ENCODE measurements at regions of chr6 and their contacts with region 1.

Region 1: GRCh38 chr6:109009236-109009961 is 85.2 kb downstream of the SESN1 start:
- DNase-seq: peak; percentile 96
- H3K4me3 ChIP-seq: peak overlapping the region; percentile 64 to 98 (median 82)
- H3K27ac ChIP-seq: peak overlapping the region; percentile 96 to 99 (median 98)
- H3K4me1 ChIP-seq: peaks cover 12 to 66% (median 21%) of the 10 kb centered on the region in 4 donors
- H3K27me3 ChIP-seq: no peaks in the 10 kb centered on the region
- CTCF ChIP-seq: peak; percentile 30 to 59 (median 34)
- EP300 ChIP-seq: no peak
- POLR2A ChIP-seq: peak; percentile 93

Region 2: GRCh38 chr6:108958900-108959770 is 50.3 kb before region 1 on chr6:
- in situ Hi-C with region 1: no loop called
- intact Hi-C with region 1: loop called (anchors 10 kb)
- DNase-seq: no peak
- H3K4me3 ChIP-seq: no peak overlapping the region
- H3K27ac ChIP-seq: no peak overlapping the region
- H3K4me1 ChIP-seq: no peaks in the 10 kb centered on the region
- H3K27me3 ChIP-seq: no peaks in the 10 kb centered on the region
- CTCF ChIP-seq: no peak
- EP300 ChIP-seq: no peak
- POLR2A ChIP-seq: no peak

Region 3: GRCh38 chr6:108983151-108983550 is 26.2 kb before region 1 on chr6:
- in situ Hi-C with region 1: no loop called
- intact Hi-C with region 1: no loop called
- DNase-seq: no peak
- H3K4me3 ChIP-seq: no peak overlapping the region
- H3K27ac ChIP-seq: no peak overlapping the region
- H3K4me1 ChIP-seq: no peaks in the 10 kb centered on the region
- H3K27me3 ChIP-seq: no peaks in the 10 kb centered on the region
- CTCF ChIP-seq: no peak
- EP300 ChIP-seq: no peak
- POLR2A ChIP-seq: no peak

Region 4: DNA sequence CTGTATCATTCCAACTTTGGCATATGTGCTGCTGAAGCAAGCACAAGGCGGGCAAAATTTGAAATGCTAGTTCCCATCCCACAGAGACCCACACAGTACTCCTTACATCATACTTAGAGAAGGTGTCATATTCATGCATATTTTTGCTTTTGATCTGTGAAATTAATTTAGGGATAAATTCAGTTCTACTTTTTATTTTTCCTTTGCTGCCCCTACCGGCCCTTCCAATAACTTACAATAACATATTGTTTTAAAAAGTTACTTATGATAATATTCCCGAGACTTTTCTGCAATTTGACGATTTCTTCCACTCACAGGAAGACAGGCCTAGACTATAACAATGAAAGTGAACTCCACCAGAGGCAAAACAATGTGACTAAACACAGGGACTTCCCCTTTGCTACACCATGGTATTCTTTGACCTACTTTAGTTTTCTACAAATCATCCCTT is 50.2 kb after region 1 on chr6:
- in situ Hi-C with region 1: loop called in 1 of 4 experiments (anchors 10 kb)
- intact Hi-C with region 1: no loop called
- DNase-seq: no peak
- H3K4me3 ChIP-seq: no peak overlapping the region
- H3K27ac ChIP-seq: peak overlapping the region; percentile 14 to 61 (median 41)
- H3K4me1 ChIP-seq: peaks cover 14 to 36% (median 30%) of the 10 kb centered on the region in 4 donors
- H3K27me3 ChIP-seq: no peaks in the 10 kb centered on the region
- CTCF ChIP-seq: peak in 4 of 5 experiments; percentile 14 to 42 (median 20)
- EP300 ChIP-seq: no peak
- POLR2A ChIP-seq: no peak

Region 5: DNA sequence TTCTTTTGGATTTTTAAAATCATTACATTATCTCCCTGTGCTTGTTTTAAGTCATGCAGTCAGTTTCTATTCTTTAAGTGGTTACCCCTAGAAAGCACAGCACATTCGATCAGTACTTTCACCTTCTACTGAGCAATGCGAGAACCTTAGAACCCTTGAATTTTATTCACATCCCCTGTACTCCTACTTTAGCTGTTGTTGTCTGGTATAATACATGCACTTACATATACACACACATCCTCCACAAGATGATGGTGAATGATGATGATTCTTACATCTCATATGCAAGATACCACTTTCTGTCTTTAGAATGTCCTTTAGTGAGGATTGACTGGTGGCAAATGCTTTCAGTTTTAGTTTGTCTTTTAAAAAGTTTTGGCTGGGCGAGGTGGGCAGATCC is 1176.5 kb after region 1 on chr6:
- in situ Hi-C with region 1: no loop called
- intact Hi-C with region 1: no loop called
- DNase-seq: no peak
- H3K4me3 ChIP-seq: no peak overlapping the region
- H3K27ac ChIP-seq: no peak overlapping the region
- H3K4me1 ChIP-seq: peaks cover 10 to 44% (median 22%) of the 10 kb centered on the region in 4 donors
- H3K27me3 ChIP-seq: no peaks in the 10 kb centered on the region
- CTCF ChIP-seq: no peak
- EP300 ChIP-seq: no peak
- POLR2A ChIP-seq: no peak